ENCODE measurements at regions of chr15 and their contacts with region 1.

Region 1: GRCh38 chr15:90400406-90401314 is 12.6 kb downstream of the IQGAP1 start:
- DNase-seq: peak; percentile 83
- H3K4me3 Mint-ChIP-seq: peak overlapping the region; percentile 52
- H3K27ac Mint-ChIP-seq: peak overlapping the region; percentile 84
- H3K4me1 Mint-ChIP-seq: peaks cover 48% of the 10 kb centered on the region
- H3K27me3 Mint-ChIP-seq: no peaks in the 10 kb centered on the region
- CTCF ChIP-seq: no peak

Region 2: GRCh38 chr15:90320061-90320884 is 80.4 kb before region 1 on chr15:
- CTCF ChIA-PET with region 1: interaction called, 3 read pairs
- intact Hi-C with region 1: loop called (anchors 5 kb)
- DNase-seq: peak; percentile 84
- H3K4me3 Mint-ChIP-seq: peak overlapping the region; percentile 7
- H3K27ac Mint-ChIP-seq: peak overlapping the region; percentile 34
- H3K4me1 Mint-ChIP-seq: peaks cover 21% of the 10 kb centered on the region
- H3K27me3 Mint-ChIP-seq: no peaks in the 10 kb centered on the region
- CTCF ChIP-seq: peak; percentile 97

Region 3: DNA sequence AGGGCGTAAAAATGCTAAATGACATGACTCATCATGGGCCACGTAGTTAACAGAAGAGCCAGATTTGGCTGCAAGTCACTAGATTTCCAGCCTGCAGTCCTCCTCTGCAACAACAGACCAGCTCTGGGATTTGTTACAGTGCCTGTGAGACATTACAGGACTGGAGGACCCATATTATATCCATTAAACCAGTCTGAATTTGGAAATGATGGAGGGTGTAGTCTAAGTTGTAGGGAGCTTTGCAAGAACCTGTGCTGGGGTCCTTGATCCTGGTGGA is 37.8 kb before region 1 on chr15:
- CTCF ChIA-PET with region 1: interaction called, 4 read pairs
- intact Hi-C with region 1: loop called (anchors 2 kb)
- DNase-seq: no peak
- H3K4me3 Mint-ChIP-seq: no peak overlapping the region
- H3K27ac Mint-ChIP-seq: peak overlapping the region; percentile 31
- H3K4me1 Mint-ChIP-seq: peaks cover 41% of the 10 kb centered on the region
- H3K27me3 Mint-ChIP-seq: no peaks in the 10 kb centered on the region
- CTCF ChIP-seq: no peak

Region 4: DNA sequence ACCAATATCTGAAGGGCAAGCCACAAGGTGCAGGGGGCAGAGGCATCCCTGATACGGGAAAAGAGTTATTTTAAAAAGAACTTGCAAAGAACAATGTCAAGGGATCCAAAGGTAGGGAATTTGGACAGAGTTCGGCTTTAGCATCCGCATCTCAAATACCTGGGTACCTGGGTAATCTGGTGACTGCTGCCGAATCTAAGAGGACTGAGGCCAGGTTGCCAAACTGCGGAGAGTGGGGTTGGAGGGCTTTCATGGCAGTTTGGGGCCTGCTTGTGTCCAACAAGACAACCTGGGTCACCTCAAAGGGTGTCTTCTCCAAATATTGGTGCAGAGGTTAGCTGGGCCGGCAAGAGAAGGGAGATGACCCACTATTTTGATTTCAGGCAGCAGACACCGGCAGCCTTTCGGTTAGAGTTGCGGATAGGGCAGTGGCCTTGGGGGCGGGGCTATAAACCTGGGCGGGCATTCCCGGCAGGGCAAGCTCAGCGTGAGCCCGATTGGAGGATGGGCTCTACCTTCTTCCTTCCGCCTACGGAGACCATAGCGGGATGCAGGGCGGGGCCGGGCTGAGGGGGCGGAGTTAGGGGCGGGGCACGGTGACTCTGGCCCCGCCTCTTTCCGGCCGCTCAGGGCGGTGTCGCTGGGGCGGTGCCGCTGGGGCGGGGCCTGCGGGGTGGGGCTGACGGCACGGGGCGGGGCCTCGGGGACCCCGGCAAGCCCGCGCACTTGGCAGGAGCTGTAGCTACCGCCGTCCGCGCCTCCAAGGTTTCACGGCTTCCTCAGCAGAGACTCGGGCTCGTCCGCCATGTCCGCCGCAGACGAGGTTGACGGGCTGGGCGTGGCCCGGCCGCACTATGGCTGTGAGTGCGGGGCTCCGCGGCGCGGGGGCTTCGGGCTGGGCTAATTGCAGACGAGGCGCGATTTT is 12.9 kb before region 1 on chr15 and contains the start of gene IQGAP1:
- CTCF ChIA-PET with region 1: interaction called, 27 read pairs
- intact Hi-C with region 1: no loop called
- DNase-seq: peak; percentile 99
- H3K4me3 Mint-ChIP-seq: peak within 1 kb of the TSS; percentile 74
- H3K27ac Mint-ChIP-seq: peak within 1 kb of the TSS; percentile 75
- H3K4me1 Mint-ChIP-seq: peaks cover 38% of the 10 kb centered on the region
- H3K27me3 Mint-ChIP-seq: no peaks in the 10 kb centered on the region
- CTCF ChIP-seq: no peak
- total RNA-seq, gene IQGAP1: 193 and 206 TPM in 2 replicates

Region 5: GRCh38 chr15:90412356-90413194 is 11.9 kb after region 1 on chr15:
- CTCF ChIA-PET with region 1: interaction called, 11 read pairs
- intact Hi-C with region 1: loop called (anchors 1 kb)
- DNase-seq: peak; percentile 79
- H3K4me3 Mint-ChIP-seq: peak overlapping the region; percentile 55
- H3K27ac Mint-ChIP-seq: peak overlapping the region; percentile 92
- H3K4me1 Mint-ChIP-seq: peaks cover 63% of the 10 kb centered on the region
- H3K27me3 Mint-ChIP-seq: no peaks in the 10 kb centered on the region
- CTCF ChIP-seq: no peak

Region 6: GRCh38 chr15:90482124-90483011 is 81.7 kb after region 1 on chr15:
- CTCF ChIA-PET with region 1: interaction called, 3 read pairs
- intact Hi-C with region 1: loop called (anchors 2 kb)
- DNase-seq: peak; percentile 63
- H3K4me3 Mint-ChIP-seq: no peak overlapping the region
- H3K27ac Mint-ChIP-seq: no peak overlapping the region
- H3K4me1 Mint-ChIP-seq: peaks cover 43% of the 10 kb centered on the region
- H3K27me3 Mint-ChIP-seq: no peaks in the 10 kb centered on the region
- CTCF ChIP-seq: no peak